Body of pancreas (tissue), 4 donors: ENCODE measurements at regions of chr18 and their contacts with region 1.

Region 1: DNA sequence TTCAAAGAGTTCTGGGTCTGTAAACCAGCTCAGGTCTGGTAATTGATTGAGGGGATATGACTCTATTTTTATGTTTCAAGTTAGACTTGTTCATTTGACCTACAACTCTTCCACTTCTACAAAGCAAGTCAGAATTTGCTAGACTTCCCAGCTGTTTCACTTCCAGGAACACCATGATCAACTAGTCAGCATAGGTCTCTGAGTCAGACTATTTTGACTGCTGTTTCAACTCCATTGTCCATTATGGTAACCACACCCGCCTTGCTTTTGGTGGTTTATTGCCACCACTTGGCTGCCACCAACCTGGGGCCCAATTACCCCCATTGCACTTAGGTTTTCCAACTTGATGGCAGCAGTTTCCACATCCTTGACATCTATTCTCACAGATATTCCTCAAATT is 116.6 kb downstream of the LAMA3 start:
- DNase-seq: no peak
- ATAC-seq: no peak
- H3K4me3 ChIP-seq: no peak overlapping the region
- H3K27ac ChIP-seq: no peak overlapping the region
- H3K4me1 ChIP-seq: no peaks in the 10 kb centered on the region
- H3K27me3 ChIP-seq: no peaks in the 10 kb centered on the region
- CTCF ChIP-seq: no peak
- POLR2A ChIP-seq: no peak

Region 2: GRCh38 chr18:23619388-23619881 is 186.5 kb before region 1 on chr18:
- intact Hi-C with region 1: loop called (anchors 5 kb)
- DNase-seq: peak; percentile 5 to 29 (median 18)
- ATAC-seq: peak; percentile 59
- H3K4me3 ChIP-seq: peak overlapping the region in 1 of 2 donors; percentile 17
- H3K27ac ChIP-seq: no peak overlapping the region
- H3K4me1 ChIP-seq: peaks cover 15% of the 10 kb centered on the region
- H3K27me3 ChIP-seq: no peaks in the 10 kb centered on the region
- CTCF ChIP-seq: no peak
- POLR2A ChIP-seq: no peak

Region 3: DNA sequence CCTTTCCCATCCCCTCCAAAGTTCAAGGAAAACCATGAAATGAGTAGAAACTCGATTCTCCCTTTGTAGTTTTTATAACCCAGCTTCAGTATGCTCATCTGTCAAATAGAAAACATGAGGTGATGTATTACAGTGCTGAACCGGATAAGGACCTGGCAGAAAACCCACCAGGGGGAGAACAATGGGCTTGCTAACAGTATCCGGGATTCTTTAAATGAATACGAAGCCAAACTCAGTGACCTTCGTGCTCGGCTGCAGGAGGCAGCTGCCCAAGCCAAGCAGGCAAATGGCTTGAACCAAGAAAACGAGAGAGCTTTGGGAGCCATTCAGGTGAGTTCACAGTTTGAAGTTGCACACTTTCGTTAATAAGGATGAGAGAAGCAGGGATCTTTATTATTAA is 95.1 kb after region 1 on chr18:
- intact Hi-C with region 1: loop called (anchors 10 kb)
- DNase-seq: peak in 2 of 4 donors; percentile 11 to 22
- ATAC-seq: no peak
- H3K4me3 ChIP-seq: no peak overlapping the region
- H3K27ac ChIP-seq: peak overlapping the region in 1 of 4 donors; percentile 17
- H3K4me1 ChIP-seq: no peaks in the 10 kb centered on the region
- H3K27me3 ChIP-seq: no peaks in the 10 kb centered on the region
- CTCF ChIP-seq: no peak
- POLR2A ChIP-seq: no peak